Heart right ventricle (tissue), 16 donors: ENCODE measurements at regions of chr6 and their contacts with region 1.

Region 1: DNA sequence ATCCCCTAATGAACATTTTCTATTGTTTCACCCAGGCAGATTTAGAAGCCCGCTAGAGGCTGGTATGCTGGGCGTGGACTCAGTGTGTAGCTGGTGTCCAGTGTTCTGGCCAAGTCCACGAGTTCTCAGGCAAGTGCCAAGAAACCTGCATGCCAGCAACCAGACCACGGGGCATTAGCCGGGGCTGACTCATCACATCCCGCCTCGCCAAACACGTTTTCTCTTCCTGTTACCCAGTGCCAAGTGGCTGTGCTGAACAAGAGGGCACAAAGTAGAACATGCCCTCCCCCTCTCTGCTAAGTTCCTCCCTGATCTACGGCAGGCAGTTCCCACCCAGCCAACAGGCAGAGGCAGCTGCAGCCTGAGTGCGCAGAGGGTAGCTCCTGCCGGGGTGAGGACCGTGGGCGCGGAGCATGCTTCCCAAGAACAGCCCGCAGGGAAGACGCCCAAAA is 29.6 kb downstream of the RAMACL start:
- DNase-seq: peak; percentile 80 to 90
- ATAC-seq: peak; percentile 87 to 98 (median 94)
- H3K4me3 ChIP-seq: peak overlapping the region in 4 of 10 donors; percentile 9 to 32 (median 24)
- H3K27ac ChIP-seq: peak overlapping the region in 9 of 10 donors; percentile 62 to 87 (median 76)
- H3K4me1 ChIP-seq: peaks cover 10 to 65% (median 50%) of the 10 kb centered on the region in 9 donors
- H3K27me3 ChIP-seq: no peaks in the 10 kb centered on the region
- CTCF ChIP-seq: peak in 2 of 9 donors; percentile 24 to 31

Region 2: GRCh38 chr6:166488076-166488685 is 68.7 kb before region 1 on chr6:
- intact Hi-C with region 1: loop called in 1 of 10 experiments (anchors 2 kb)
- DNase-seq: peak; percentile 63 to 71
- ATAC-seq: peak; percentile 58 to 91 (median 80)
- H3K4me3 ChIP-seq: peak overlapping the region in 2 of 10 donors; percentile 2 to 5
- H3K27ac ChIP-seq: peak overlapping the region; percentile 18 to 88 (median 59)
- H3K4me1 ChIP-seq: peaks cover 6 to 38% (median 29%) of the 10 kb centered on the region in 9 donors
- H3K27me3 ChIP-seq: no peaks in the 10 kb centered on the region
- CTCF ChIP-seq: no peak

Region 3: DNA sequence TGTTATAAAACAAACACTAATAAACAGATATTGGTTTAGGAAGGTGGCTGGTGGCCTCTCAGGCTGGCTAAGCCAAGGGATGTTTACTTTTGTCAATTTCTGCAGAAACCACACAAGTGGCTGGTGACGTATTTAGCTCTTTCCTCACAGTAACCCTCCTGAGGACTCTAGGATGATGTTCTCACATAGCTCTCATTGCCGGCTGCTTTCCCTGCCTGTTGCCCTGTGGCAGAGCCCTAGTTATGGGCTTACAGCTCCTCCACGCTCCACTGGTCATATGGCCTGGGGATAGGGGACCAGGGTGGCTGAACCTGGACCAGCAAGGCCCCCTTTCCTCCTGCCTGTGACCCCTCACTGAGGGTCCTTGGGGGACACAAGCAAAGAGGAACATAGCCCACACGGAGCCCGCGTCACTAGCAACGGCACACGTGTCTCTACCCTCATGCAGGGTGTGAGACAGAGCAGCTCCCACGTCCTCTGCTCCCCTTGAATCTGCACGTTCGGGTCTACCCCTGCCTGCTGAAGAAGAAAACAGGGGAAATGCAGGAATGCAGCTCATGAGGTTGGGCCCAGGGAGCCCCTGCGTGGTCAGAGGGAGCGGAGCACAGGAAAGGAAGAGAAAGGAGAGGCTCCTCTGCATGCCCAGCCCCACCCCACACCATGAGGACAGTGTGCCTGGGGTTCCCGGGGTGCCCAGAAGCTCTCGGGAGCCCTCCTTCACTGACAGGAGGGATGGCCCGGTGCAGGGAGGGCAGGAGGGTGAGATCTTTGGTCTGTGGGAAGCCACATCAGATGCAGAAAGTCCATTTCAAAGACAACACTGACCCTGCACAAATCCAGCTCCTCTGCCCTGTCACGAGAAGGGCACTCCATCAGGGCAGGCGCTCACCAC is 15.7 kb after region 1 on chr6:
- intact Hi-C with region 1: loop called in 1 of 10 experiments (anchors 1 kb)
- DNase-seq: no peak
- ATAC-seq: peak; percentile 10 to 70 (median 40)
- H3K4me3 ChIP-seq: no peak overlapping the region
- H3K27ac ChIP-seq: peak overlapping the region in 1 of 10 donors; percentile 33
- H3K4me1 ChIP-seq: peaks cover 0 to 45% (median 26%) of the 10 kb centered on the region in 9 donors
- H3K27me3 ChIP-seq: no peaks in the 10 kb centered on the region
- CTCF ChIP-seq: no peak

Region 4: GRCh38 chr6:166614589-166614988 is 57.7 kb after region 1 on chr6:
- intact Hi-C with region 1: loop called in 1 of 10 experiments (anchors 5 kb)
- DNase-seq: peak in 1 of 2 donors; percentile 6
- ATAC-seq: peak in 6 of 8 donors; percentile 7 to 43 (median 21)
- H3K4me3 ChIP-seq: no peak overlapping the region
- H3K27ac ChIP-seq: peak overlapping the region; percentile 52 to 84 (median 70)
- H3K4me1 ChIP-seq: peaks cover 15 to 64% (median 53%) of the 10 kb centered on the region in 9 donors
- H3K27me3 ChIP-seq: no peaks in the 10 kb centered on the region
- CTCF ChIP-seq: peak in 1 of 9 donors; percentile 26

Region 5: GRCh38 chr6:166619912-166620311 is 63.0 kb after region 1 on chr6:
- intact Hi-C with region 1: loop called in 5 of 10 experiments (anchors 5 kb)
- DNase-seq: peak in 1 of 2 donors; percentile 31
- ATAC-seq: peak in 6 of 8 donors; percentile 31 to 58 (median 54)
- H3K4me3 ChIP-seq: no peak overlapping the region
- H3K27ac ChIP-seq: peak overlapping the region in 9 of 10 donors; percentile 9 to 67 (median 42)
- H3K4me1 ChIP-seq: peaks cover 8 to 79% (median 72%) of the 10 kb centered on the region in 9 donors
- H3K27me3 ChIP-seq: no peaks in the 10 kb centered on the region
- CTCF ChIP-seq: no peak

Region 6: DNA sequence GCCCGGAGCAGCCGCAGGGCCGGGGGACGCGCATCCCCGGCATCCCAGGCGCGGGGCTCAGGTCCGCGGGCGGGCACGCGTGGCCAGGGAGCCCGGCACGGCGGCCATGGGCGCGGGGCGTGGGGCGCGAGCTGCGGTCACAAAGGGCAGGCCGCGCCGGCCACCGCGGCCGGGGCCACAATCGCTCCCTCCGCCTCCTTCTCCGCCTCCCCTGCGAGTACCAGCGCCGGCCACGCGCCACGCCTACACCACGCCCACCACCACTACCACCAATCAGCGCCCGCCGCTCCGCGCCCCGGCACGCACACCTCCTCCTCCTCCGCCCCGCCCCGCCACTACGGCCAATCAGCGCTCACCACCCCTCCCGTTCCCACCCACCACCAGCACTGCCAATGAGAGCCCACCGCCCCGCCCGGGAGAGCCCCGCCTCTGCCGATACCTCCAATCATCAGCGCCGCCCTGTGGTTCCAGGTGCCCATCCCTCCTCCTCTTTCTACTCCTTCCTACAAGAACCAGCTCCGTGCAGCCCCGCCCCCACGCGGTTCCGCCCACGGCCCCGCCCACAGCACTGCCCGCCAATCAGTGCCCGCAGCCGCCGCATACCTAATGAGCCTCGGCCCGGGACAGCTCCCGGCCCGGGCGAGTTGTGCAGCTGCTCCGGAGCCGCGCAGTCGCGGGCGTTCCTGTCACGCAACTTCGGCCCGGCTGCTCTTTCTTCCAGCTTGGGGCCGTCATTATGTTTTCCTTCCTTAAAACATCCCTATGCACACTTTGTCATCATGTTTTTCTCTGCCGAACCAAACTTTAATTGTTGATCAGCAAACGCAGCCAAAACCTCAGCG is 70.4 kb after region 1 on chr6 and contains the start of gene RPS6KA2:
- intact Hi-C with region 1: loop called in 7 of 10 experiments (anchors 1 to 5 kb)
- DNase-seq: peak; percentile 100
- ATAC-seq: peak; percentile 93 to 97 (median 95)
- H3K4me3 ChIP-seq: peak within 1 kb of the TSS; percentile 78 to 97 (median 92)
- H3K27ac ChIP-seq: peak within 1 kb of the TSS; percentile 85 to 97 (median 90)
- H3K4me1 ChIP-seq: peaks cover 5 to 76% (median 59%) of the 10 kb centered on the region in 9 donors
- H3K27me3 ChIP-seq: peaks cover 0 to 14% (median 0%) of the 10 kb centered on the region in 7 donors
- CTCF ChIP-seq: peak in 4 of 9 donors; percentile 28 to 43 (median 36)
- total RNA-seq, gene RPS6KA2: 47.7 to 91.4 (median 76.0) TPM